SK-N-SH (cell line): ENCODE measurements at regions of chr14 and their contacts with region 1.

Region 1: GRCh38 chr14:24366721-24367513 is 1.1 kb upstream of the NFATC4 start:
- DNase-seq: peak; percentile 85
- H3K4me3 ChIP-seq: peak overlapping the region; percentile 85 to 86
- H3K27ac ChIP-seq: peak overlapping the region; percentile 93 to 99
- H3K4me1 ChIP-seq: peaks cover 14 to 25% of the 10 kb centered on the region in 2 experiments; a peak in 3 of 4 replicates
- H3K27me3 ChIP-seq: no peaks in the 10 kb centered on the region
- CTCF ChIP-seq: no peak
- EP300 ChIP-seq: peak; percentile 53 to 62; a peak in 2 of 4 replicates
- RAD21 ChIP-seq: no peak; the same call in 1 of the 2 replicates

Region 2: GRCh38 chr14:24195191-24196070 is 171.5 kb before region 1 on chr14 and contains the start of gene TM9SF1:
- CTCF ChIA-PET with region 1: no interaction called
- POLR2A ChIA-PET with region 1: no interaction called
- DNase-seq: peak; percentile 94
- H3K4me3 ChIP-seq: peak within 1 kb of the TSS; percentile 84 to 85
- H3K27ac ChIP-seq: peak within 1 kb of the TSS; percentile 88 to 89
- H3K4me1 ChIP-seq: peaks cover 11% of the 10 kb centered on the region in 2 experiments; a peak in 2 of 4 replicates
- H3K27me3 ChIP-seq: no peaks in the 10 kb centered on the region
- CTCF ChIP-seq: no peak
- EP300 ChIP-seq: peak in 1 of 2 experiments; percentile 7; a peak in 1 of 4 replicates
- RAD21 ChIP-seq: no peak
- polyA plus RNA-seq, gene TM9SF1: 48.7 and 54.8 TPM in 2 replicates

Region 3: GRCh38 chr14:24332268-24332993 is 34.5 kb before region 1 on chr14:
- CTCF ChIA-PET with region 1: interaction called, 77 read pairs
- POLR2A ChIA-PET with region 1: interaction called, 4 read pairs
- DNase-seq: peak; percentile 94
- H3K4me3 ChIP-seq: peak overlapping the region in 1 of 2 experiments; percentile 30; a peak in 3 of 4 replicates
- H3K27ac ChIP-seq: no peak overlapping the region
- H3K4me1 ChIP-seq: peaks cover 0 to 21% of the 10 kb centered on the region in 2 experiments; a peak in 1 of 4 replicates
- H3K27me3 ChIP-seq: peaks cover 31% of the 10 kb centered on the region
- CTCF ChIP-seq: peak; percentile 68
- EP300 ChIP-seq: no peak
- RAD21 ChIP-seq: peak; percentile 59

Region 4: GRCh38 chr14:24351517-24351916 is 15.4 kb before region 1 on chr14:
- CTCF ChIA-PET with region 1: interaction called, 31 read pairs
- POLR2A ChIA-PET with region 1: interaction called, 3 read pairs
- DNase-seq: no peak
- H3K4me3 ChIP-seq: no peak overlapping the region
- H3K27ac ChIP-seq: no peak overlapping the region
- H3K4me1 ChIP-seq: no peaks in the 10 kb centered on the region; a peak in 1 of 4 replicates
- H3K27me3 ChIP-seq: peaks cover 64% of the 10 kb centered on the region
- CTCF ChIP-seq: peak; percentile 17; the same call in 1 of the 2 replicates
- EP300 ChIP-seq: no peak
- RAD21 ChIP-seq: peak; percentile 26; the same call in 1 of the 2 replicates

Region 5: GRCh38 chr14:24398653-24399446 is 31.9 kb after region 1 on chr14 and contains the start of gene NYNRIN:
- CTCF ChIA-PET with region 1: interaction called, 35 read pairs
- POLR2A ChIA-PET with region 1: interaction called, 7 read pairs
- DNase-seq: peak; percentile 87
- H3K4me3 ChIP-seq: peak within 1 kb of the TSS; percentile 66 to 73
- H3K27ac ChIP-seq: peak within 1 kb of the TSS in 1 of 2 experiments; percentile 72; a peak in 1 of 4 replicates
- H3K4me1 ChIP-seq: peaks cover 0 to 32% of the 10 kb centered on the region in 2 experiments; a peak in 1 of 4 replicates
- H3K27me3 ChIP-seq: no peaks in the 10 kb centered on the region
- CTCF ChIP-seq: no peak
- EP300 ChIP-seq: no peak
- RAD21 ChIP-seq: no peak
- polyA plus RNA-seq, gene NYNRIN: 4.7 and 4.8 TPM in 2 replicates

Region 6: DNA sequence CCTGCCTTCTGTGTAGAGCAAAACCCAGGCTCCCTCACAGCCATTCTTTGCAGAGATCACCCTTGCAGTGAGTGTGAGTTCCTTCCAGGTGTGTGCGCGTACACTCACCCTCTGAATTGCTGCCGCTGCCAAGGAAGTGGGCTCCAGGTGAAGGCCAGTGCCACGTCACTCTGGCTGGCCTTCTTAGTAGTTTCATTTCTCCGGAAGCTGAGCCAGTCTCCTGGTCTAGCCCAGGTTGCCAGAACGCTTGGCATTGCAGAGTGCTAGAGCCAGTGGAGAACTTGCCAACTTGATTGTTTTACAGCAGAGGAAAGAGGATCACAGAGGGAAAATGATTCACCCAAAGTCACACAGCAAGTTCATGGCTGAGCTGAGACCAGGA is 51.6 kb after region 1 on chr14:
- CTCF ChIA-PET with region 1: interaction called, 275 read pairs
- POLR2A ChIA-PET with region 1: no interaction called
- DNase-seq: no peak
- H3K4me3 ChIP-seq: no peak overlapping the region
- H3K27ac ChIP-seq: no peak overlapping the region
- H3K4me1 ChIP-seq: no peaks in the 10 kb centered on the region; a peak in 1 of 4 replicates
- H3K27me3 ChIP-seq: 0 out of 2 replicates have a peak, but pooled peaks cover 5% of the 10 kb centered on the region
- CTCF ChIP-seq: no peak
- EP300 ChIP-seq: no peak
- RAD21 ChIP-seq: no peak

Region 7: DNA sequence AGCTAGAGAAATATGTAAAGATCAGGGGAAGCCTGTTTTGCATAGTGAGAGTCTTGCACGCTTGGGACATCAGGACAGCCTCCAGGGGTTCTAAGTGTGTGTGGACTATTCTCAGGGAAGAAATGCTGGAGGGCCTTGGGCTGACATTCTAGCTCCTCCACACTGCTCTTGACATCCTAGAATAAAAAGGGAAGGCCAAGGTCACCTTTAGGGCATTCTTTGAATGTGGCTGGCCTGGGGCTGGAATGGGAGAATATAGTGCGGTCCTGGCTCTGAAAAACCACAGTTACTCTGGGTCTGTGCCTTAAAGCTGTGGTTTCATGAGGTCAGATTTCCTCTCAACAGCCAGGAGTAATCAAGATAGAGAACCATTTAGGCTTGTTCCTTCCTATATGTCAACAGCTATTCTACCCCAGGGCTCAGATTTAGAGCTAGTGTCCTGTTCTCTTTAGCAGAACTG is 116.8 kb after region 1 on chr14:
- CTCF ChIA-PET with region 1: no interaction called
- POLR2A ChIA-PET with region 1: no interaction called
- DNase-seq: no peak
- H3K4me3 ChIP-seq: no peak overlapping the region
- H3K27ac ChIP-seq: no peak overlapping the region
- H3K4me1 ChIP-seq: no peaks in the 10 kb centered on the region; a peak in 1 of 4 replicates
- H3K27me3 ChIP-seq: no peaks in the 10 kb centered on the region
- CTCF ChIP-seq: no peak
- EP300 ChIP-seq: no peak
- RAD21 ChIP-seq: no peak